ENCODE measurements at regions of chr4 and their contacts with region 1.

Region 1: GRCh38 chr4:38132107-38132673 is 172.0 kb downstream of the PTTG2 start:
- DNase-seq: peak; percentile 84
- ATAC-seq: peak; percentile 62
- H3K4me3 Mint-ChIP-seq: peak overlapping the region; percentile 57
- H3K27ac Mint-ChIP-seq: peak overlapping the region; percentile 96
- H3K4me1 Mint-ChIP-seq: peaks cover 74% of the 10 kb centered on the region
- H3K27me3 Mint-ChIP-seq: peaks cover 3% of the 10 kb centered on the region

Region 2: DNA sequence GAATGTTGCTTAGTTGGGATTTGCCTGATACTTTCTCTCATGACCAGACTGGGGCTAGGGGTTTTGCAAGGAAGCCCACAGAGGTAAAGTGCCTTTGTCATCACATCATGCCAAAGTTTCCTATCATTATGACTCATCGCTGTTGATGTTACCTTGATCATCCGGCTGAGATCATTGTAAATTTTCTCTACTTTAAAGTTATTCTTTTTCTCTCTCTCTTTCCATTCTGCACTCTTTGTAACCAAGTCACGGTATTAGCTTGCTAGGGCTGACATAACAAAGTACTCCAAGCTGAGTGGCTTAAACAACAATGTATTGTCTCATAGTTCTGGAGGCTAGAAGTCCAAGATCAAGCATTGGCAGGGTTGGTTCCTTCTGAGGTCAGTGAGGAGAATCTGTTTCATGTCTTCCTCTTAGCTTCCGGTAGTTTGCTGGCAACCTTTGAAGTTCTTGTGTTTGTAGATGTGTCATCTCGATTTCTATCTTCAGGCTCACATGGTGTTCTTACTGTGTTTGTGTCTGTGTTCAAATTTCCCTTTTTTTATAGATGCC is 1737.8 kb before region 1 on chr4:
- CTCF ChIA-PET with region 1: no interaction called
- POLR2A ChIA-PET with region 1: no interaction called
- intact Hi-C with region 1: loop called in 1 of 2 experiments (anchors 5 kb)
- DNase-seq: peak; percentile 60
- ATAC-seq: peak; percentile 94
- H3K4me3 Mint-ChIP-seq: peak overlapping the region; percentile 25
- H3K27ac Mint-ChIP-seq: peak overlapping the region; percentile 93
- H3K4me1 Mint-ChIP-seq: peaks cover 20% of the 10 kb centered on the region
- H3K27me3 Mint-ChIP-seq: no peaks in the 10 kb centered on the region

Region 3: DNA sequence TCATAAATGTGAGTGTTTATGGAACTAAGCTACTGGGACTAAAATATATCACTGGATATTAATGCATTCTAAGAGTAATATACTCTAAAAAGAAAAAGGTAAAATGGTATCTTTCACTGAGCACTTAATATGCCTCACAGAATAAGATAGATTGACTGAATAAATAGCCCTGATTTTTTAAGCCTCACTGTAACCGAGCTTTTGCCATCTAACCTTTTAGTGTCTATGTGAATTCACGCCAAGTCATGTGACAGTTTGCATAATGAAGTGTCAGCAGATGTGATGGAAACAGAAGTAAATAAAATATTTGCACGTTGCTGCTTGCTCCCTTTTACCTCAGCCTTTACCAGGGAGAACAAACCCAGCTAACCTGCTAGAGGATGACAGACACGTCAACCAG is 1007.4 kb before region 1 on chr4:
- CTCF ChIA-PET with region 1: no interaction called
- POLR2A ChIA-PET with region 1: no interaction called
- intact Hi-C with region 1: no loop called
- DNase-seq: no peak
- ATAC-seq: no peak
- H3K4me3 Mint-ChIP-seq: no peak overlapping the region
- H3K27ac Mint-ChIP-seq: no peak overlapping the region
- H3K4me1 Mint-ChIP-seq: no peaks in the 10 kb centered on the region
- H3K27me3 Mint-ChIP-seq: no peaks in the 10 kb centered on the region

Region 4: DNA sequence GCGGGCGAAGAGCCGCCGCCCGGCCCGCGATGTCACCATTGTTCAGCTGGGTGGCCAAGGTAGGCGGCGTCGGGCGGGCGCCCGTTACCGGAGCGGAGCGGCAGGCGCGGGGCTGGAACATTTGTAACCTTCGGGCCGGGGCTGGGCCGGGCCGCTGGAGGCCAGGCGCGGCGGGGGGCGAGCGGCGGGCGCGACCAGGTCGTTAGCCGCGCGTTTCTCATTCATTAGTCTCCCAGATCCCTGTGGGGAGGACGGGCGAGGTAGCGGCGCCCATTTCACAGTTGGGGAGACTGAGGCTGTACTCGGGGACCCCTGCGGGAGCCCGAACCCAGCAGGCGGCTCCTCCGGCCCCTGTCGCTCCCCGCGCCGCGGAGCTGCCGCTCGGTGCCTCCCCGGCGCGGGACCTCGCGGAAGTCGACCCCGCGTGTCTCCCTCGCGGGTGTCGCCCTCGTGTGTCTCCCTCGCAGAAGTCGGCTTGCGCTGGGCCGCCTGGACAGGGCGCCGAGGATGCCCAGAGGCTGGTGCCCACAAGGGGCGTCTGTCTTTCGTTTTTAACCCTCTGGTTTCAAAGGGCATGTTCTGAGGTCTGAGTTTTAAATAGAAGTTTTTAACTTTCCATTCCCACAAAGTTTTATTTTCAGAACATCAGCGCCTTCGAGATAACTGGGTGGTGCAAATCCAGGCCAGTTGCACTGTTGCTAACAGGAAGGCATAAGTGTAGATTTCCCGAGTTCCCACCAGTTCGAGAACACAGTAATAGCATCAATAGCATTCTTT is 154.5 kb before region 1 on chr4:
- CTCF ChIA-PET with region 1: no interaction called
- POLR2A ChIA-PET with region 1: interaction called, 3 read pairs
- intact Hi-C with region 1: loop called in 1 of 2 experiments (anchors 5 kb)
- DNase-seq: peak; percentile 84
- ATAC-seq: peak; percentile 79
- H3K4me3 Mint-ChIP-seq: peak overlapping the region; percentile 80
- H3K27ac Mint-ChIP-seq: peak overlapping the region; percentile 75
- H3K4me1 Mint-ChIP-seq: peaks cover 42% of the 10 kb centered on the region
- H3K27me3 Mint-ChIP-seq: no peaks in the 10 kb centered on the region

Region 5: DNA sequence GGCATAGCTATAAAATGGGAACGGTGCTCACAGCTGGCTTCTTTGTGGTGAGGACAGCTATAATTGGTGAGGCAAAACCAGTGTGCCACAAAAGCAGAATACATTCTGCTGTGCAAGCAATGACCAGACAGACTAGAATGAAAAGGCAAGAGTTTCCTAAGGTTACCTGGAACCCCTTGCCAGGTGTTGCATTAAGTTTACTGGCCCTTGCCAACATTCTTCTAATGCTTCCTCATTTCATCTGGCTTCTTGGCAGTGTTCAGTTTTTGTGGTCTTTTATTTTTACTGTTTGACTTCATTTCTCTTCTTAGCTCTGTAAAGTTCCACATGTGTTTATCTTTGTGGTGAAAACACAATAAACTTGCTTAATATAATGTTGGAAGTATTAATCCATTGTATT is 40.6 kb before region 1 on chr4:
- CTCF ChIA-PET with region 1: interaction called, 10 read pairs
- POLR2A ChIA-PET with region 1: interaction called, 16 read pairs
- intact Hi-C with region 1: loop called (anchors 1 kb)
- DNase-seq: no peak
- ATAC-seq: no peak
- H3K4me3 Mint-ChIP-seq: no peak overlapping the region
- H3K27ac Mint-ChIP-seq: peak overlapping the region; percentile 89
- H3K4me1 Mint-ChIP-seq: peaks cover 34% of the 10 kb centered on the region
- H3K27me3 Mint-ChIP-seq: no peaks in the 10 kb centered on the region

Region 6: DNA sequence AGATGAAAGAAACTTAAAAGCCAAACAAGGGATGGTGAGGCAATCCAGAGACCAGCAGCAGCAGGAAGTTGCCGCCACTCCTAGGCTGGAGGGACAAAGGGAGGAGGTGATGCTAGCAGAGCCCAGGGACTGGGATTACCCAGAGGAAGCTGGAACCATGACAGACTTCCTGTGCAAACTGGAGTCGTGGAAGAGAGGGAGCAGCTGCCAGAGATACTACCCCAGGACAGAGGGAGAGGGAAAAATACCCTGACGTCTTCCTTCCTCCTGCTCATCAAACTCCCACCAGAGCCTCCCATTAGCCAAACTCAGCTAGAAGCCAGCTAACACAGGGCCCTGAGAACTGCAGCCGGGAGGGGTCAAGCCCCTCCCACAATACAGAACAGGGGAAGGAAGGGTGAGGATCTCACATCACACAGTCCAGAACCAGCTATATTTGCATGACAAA is 430.6 kb after region 1 on chr4:
- CTCF ChIA-PET with region 1: no interaction called
- POLR2A ChIA-PET with region 1: no interaction called
- intact Hi-C with region 1: loop called in 1 of 2 experiments (anchors 1 kb)
- DNase-seq: no peak
- ATAC-seq: no peak
- H3K4me3 Mint-ChIP-seq: no peak overlapping the region
- H3K27ac Mint-ChIP-seq: no peak overlapping the region
- H3K4me1 Mint-ChIP-seq: peaks cover 19% of the 10 kb centered on the region
- H3K27me3 Mint-ChIP-seq: peaks cover 8% of the 10 kb centered on the region

Region 7: DNA sequence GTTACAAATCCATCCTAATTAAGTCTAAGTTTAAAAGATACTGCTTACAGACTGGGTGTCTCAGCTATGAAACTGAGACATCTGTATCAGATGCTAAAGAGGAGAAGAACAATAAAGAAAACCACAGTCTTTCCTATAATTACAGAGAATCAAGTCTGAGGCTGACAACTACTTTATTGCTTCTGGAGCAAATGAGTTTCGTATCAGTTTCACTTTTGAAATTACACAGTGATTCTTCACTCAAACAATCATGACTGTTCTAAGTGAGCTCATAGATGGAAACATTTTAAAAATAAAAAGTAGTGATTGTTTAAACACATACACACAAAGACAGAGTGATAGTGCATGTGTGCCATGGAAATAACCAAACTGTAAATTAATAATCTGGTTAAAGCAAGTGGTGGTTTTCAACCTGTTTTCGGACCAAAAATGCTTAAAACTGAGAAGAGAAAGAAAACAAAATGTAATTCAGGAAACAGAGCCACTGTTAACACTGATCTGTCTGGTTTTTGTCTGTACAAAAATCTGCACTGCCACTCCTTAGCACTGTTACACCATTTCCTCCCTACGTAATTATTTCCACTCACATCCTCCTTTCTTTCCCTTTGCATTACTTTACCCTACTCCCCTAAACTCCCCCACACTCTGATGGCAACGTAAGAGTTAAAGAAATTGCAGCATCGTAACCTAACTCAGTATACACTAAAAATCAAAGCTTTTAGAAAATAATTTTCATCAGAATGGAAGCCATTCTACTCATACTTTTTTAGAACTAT is 1221.5 kb after region 1 on chr4:
- CTCF ChIA-PET with region 1: no interaction called
- POLR2A ChIA-PET with region 1: no interaction called
- intact Hi-C with region 1: loop called in 1 of 2 experiments (anchors 1 kb)
- DNase-seq: peak; percentile 47
- ATAC-seq: peak; percentile 85
- H3K4me3 Mint-ChIP-seq: peak overlapping the region; percentile 70
- H3K27ac Mint-ChIP-seq: peak overlapping the region; percentile 94
- H3K4me1 Mint-ChIP-seq: peaks cover 79% of the 10 kb centered on the region
- H3K27me3 Mint-ChIP-seq: no peaks in the 10 kb centered on the region

Measured in activated CD4-positive, alpha-beta T cell treated with anti-CD3 and anti-CD28 coated beads for 36 hours (primary cell).